H1 (cell line): ENCODE measurements at regions of chr2 and their contacts with region 1.

Region 1: GRCh38 chr2:46776687-46777327 is 138.8 kb downstream of the MCFD2 start:
- DNase-seq: no peak
- H3K4me3 ChIP-seq: no peak overlapping the region
- H3K27ac ChIP-seq: no peak overlapping the region
- H3K4me1 ChIP-seq: peaks cover 0 to 3% (median 0%) of the 10 kb centered on the region in 4 experiments; a peak in 2 of 7 replicates
- H3K27me3 ChIP-seq: no peaks in the 10 kb centered on the region
- CTCF ChIP-seq: peak; percentile 1 to 65 (median 61)
- EP300 ChIP-seq: no peak
- POLR2A ChIP-seq: no peak
- RAD21 ChIP-seq: peak; percentile 68 to 77

Region 2: GRCh38 chr2:46510598-46511177 is 266.1 kb before region 1 on chr2:
- CTCF ChIA-PET with region 1: no interaction called
- POLR2A ChIA-PET with region 1: no interaction called
- DNase-seq: no peak
- H3K4me3 ChIP-seq: no peak overlapping the region
- H3K27ac ChIP-seq: no peak overlapping the region
- H3K4me1 ChIP-seq: peaks cover 0 to 5% (median 4%) of the 10 kb centered on the region in 4 experiments; a peak in 3 of 7 replicates
- H3K27me3 ChIP-seq: no peaks in the 10 kb centered on the region
- CTCF ChIP-seq: no peak
- EP300 ChIP-seq: no peak
- POLR2A ChIP-seq: no peak
- RAD21 ChIP-seq: no peak

Region 3: DNA sequence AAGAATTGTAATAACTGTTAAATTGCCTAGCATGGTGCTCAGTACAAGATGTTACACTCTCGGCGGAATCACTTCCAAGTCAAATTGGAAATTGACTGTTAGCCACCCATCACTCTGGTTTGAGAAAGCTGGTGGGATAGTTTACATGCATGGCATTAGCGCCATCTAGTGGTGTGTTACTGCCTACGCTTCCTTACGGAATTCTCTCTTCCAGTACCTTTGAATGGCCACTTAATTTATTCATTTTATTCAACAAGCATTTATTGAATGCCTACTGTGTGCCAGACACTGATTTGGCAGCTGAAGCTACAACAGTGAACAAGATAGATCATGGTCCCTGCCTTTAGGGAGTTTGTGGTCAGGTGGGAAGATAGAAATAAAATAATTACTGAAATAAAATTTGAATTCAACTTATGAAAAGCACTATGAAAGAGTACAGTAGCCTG is 126.2 kb before region 1 on chr2:
- CTCF ChIA-PET with region 1: interaction called, 64 read pairs
- POLR2A ChIA-PET with region 1: interaction called, 4 read pairs
- DNase-seq: peak; percentile 17 to 69
- H3K4me3 ChIP-seq: no peak overlapping the region
- H3K27ac ChIP-seq: no peak overlapping the region
- H3K4me1 ChIP-seq: no peaks in the 10 kb centered on the region
- H3K27me3 ChIP-seq: no peaks in the 10 kb centered on the region
- CTCF ChIP-seq: peak in 2 of 3 experiments; percentile 89 to 93; a peak in 3 of 4 replicates
- EP300 ChIP-seq: no peak
- POLR2A ChIP-seq: no peak
- RAD21 ChIP-seq: peak; percentile 96

Region 4: GRCh38 chr2:46657042-46657504 is 119.7 kb before region 1 on chr2:
- CTCF ChIA-PET with region 1: interaction called, 64 read pairs
- POLR2A ChIA-PET with region 1: no interaction called
- DNase-seq: no peak
- H3K4me3 ChIP-seq: no peak overlapping the region
- H3K27ac ChIP-seq: no peak overlapping the region
- H3K4me1 ChIP-seq: no peaks in the 10 kb centered on the region
- H3K27me3 ChIP-seq: no peaks in the 10 kb centered on the region
- CTCF ChIP-seq: peak in 2 of 3 experiments; percentile 77 to 78; a peak in 3 of 4 replicates
- EP300 ChIP-seq: no peak
- POLR2A ChIP-seq: no peak
- RAD21 ChIP-seq: peak; percentile 69 to 77

Region 5: GRCh38 chr2:46719487-46719886 is 57.3 kb before region 1 on chr2:
- CTCF ChIA-PET with region 1: interaction called, 16 read pairs
- POLR2A ChIA-PET with region 1: no interaction called
- DNase-seq: no peak
- H3K4me3 ChIP-seq: no peak overlapping the region
- H3K27ac ChIP-seq: no peak overlapping the region
- H3K4me1 ChIP-seq: peaks cover 0 to 8% (median 3%) of the 10 kb centered on the region in 4 experiments; a peak in 4 of 7 replicates
- H3K27me3 ChIP-seq: no peaks in the 10 kb centered on the region
- CTCF ChIP-seq: no peak
- EP300 ChIP-seq: no peak
- POLR2A ChIP-seq: no peak
- RAD21 ChIP-seq: no peak

Region 6: DNA sequence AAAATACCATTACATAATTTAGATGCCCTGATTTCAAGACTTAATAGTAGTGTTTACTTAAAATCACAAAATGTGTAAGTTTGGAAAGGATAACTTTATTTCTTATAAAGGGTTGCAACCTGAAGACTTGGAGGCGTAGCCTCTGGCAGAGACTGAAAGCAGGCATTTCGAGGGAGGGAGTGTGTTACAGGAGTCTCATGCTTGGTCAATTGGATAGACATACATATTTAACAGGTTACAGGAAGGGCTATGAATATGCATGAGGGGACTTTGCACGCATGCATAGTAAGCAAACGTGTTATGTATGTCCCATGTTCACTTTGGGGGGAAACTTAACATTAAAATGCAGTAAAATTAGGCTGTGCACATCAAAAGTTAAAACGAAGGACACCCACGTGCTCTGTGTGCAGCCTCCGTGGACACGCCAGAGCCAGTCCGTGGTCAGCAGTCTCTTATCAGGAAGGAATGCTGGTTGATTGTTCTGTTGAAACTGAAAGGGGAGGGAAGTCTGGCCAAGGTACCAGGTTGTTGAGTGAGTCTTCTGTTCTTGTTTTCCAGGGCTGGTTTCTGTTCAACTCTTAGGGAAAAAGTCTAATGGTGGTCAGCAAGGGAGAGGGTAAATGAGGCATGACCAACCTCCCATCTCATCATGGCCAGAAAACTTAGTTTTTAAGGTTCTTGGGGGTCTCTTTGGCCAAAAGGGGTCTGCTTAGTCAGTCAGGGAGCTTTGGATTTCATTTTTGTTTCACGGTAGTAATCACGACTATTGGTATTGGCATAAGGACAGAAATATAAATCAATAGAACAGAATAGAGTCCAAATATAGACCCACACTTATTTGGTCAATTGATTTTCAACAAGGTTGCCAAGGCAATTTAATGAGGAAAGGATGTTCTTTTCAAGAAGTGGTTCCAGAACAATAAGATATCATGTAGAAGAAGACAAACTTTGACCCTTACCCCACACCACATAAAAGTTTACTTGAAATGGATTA is 16.9 kb after region 1 on chr2:
- CTCF ChIA-PET with region 1: interaction called, 18 read pairs
- POLR2A ChIA-PET with region 1: no interaction called
- DNase-seq: peak in 1 of 2 experiments; percentile 11
- H3K4me3 ChIP-seq: no peak overlapping the region
- H3K27ac ChIP-seq: no peak overlapping the region
- H3K4me1 ChIP-seq: no peaks in the 10 kb centered on the region
- H3K27me3 ChIP-seq: no peaks in the 10 kb centered on the region
- CTCF ChIP-seq: no peak
- EP300 ChIP-seq: no peak
- POLR2A ChIP-seq: no peak
- RAD21 ChIP-seq: no peak

Region 7: DNA sequence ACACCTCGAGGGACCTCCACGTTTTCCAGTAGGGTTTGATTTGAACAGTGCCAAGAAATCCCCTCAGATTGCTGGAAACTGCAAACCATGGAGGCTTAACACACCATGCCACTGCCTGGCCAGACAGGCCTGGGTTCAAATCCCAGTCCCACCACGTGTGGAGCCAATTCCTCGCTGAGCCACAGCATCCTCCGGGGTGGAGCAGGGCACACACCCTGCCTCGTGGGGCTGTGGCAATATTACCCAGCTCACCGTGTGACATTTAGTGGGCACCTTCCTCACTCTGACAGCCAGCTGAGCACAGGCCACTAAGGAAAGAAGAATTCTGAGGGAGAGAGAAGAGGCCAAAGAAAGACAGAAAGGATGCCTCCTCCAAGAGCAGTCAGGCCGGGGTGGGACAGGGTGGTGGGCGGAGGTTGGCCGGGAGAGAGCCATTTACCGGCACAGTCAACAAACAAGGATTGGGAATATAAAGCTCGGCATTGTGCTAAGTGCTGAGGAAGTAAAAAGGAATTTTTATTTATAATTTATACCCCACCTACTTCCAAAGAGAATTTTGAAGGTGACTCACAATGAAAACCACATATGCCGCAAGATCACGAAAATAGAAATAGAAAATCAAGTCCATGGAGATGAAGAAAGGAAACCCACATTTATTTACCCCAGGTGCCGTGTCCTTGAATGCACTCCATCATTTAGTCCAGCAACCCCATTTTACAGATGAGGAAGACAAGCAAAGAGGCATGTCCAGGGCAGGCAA is 27.3 kb after region 1 on chr2:
- CTCF ChIA-PET with region 1: interaction called, 18 read pairs
- POLR2A ChIA-PET with region 1: no interaction called
- DNase-seq: no peak
- H3K4me3 ChIP-seq: no peak overlapping the region
- H3K27ac ChIP-seq: no peak overlapping the region
- H3K4me1 ChIP-seq: no peaks in the 10 kb centered on the region
- H3K27me3 ChIP-seq: no peaks in the 10 kb centered on the region
- CTCF ChIP-seq: no peak
- EP300 ChIP-seq: no peak
- POLR2A ChIP-seq: no peak
- RAD21 ChIP-seq: no peak

Region 8: DNA sequence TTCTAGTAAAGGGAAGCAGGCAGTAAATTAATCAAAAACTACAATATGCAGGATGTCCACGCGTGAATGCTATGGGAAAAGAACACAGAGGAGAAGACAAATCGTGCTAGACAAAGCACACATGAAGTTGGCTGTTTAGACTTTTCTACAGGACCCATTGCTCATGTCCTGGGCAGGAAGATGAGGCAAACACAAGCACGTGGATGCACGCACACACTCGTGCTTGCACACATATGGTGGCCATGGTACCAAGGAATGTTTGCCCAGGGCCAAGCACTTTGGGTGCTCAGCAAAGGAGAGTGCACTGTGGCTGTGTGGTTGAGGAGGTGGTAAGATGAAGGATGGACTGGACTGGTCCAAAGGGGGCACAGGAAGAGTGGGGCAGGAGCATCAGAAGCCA is 219.0 kb after region 1 on chr2:
- CTCF ChIA-PET with region 1: no interaction called
- POLR2A ChIA-PET with region 1: no interaction called
- DNase-seq: no peak
- H3K4me3 ChIP-seq: no peak overlapping the region
- H3K27ac ChIP-seq: no peak overlapping the region; the same call in 1 of the 2 replicates
- H3K4me1 ChIP-seq: no peaks in the 10 kb centered on the region
- H3K27me3 ChIP-seq: no peaks in the 10 kb centered on the region
- CTCF ChIP-seq: no peak
- EP300 ChIP-seq: no peak
- POLR2A ChIP-seq: no peak
- RAD21 ChIP-seq: no peak